ENCODE measurements at regions of chr9 and their contacts with region 1.

Region 1: DNA sequence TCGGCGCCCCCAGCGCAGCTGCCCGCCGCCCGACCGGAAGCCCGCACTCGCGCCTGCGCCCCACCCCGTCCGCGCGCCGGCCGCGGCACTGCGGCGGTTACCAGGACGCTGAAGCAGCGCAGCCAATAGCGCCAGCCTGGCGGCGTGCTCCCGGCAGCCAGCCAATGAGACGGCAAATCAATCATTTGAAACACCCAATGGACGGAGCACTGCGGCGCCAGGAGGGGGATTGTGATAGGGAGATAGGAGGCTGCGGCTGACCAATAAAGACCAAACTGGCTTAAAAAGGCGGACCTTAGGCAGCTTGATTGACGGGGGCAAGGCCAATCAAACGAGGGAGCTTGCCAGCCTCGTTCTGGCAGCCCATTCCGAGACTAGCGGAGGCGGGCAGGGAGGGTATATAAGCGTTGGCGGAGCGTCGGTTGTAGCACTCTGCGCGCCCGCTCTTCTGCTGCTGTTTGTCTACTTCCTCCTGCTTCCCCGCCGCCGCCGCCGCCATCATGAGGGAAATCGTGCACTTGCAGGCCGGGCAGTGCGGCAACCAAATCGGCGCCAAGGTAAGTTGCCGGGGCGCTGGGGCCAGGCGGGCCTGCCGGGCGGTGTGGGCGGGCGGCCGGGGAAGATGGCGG is at the start of gene TUBB4B:
- DNase-seq: peak; percentile 94 to 100
- H3K4me3 ChIP-seq: peak within 1 kb of the TSS; percentile 64 to 92 (median 76)
- H3K27ac ChIP-seq: peak within 1 kb of the TSS; percentile 67; the same call in 1 of the 2 replicates
- H3K4me1 ChIP-seq: peaks cover 0 to 27% (median 21%) of the 10 kb centered on the region in 4 experiments; a peak in 6 of 7 replicates
- H3K27me3 ChIP-seq: no peaks in the 10 kb centered on the region
- CTCF ChIP-seq: no peak
- EP300 ChIP-seq: no peak
- POLR2A ChIP-seq: peak in 1 of 2 experiments; percentile 99; a peak in 2 of 3 replicates
- RAD21 ChIP-seq: no peak
- total RNA-seq, gene TUBB4B: 307 and 311 TPM in 2 replicates

Region 2: GRCh38 chr9:137176302-137177182 is 64.4 kb before region 1 on chr9:
- CTCF ChIA-PET with region 1: interaction called, 29 read pairs
- POLR2A ChIA-PET with region 1: interaction called, 9 read pairs
- DNase-seq: no peak
- H3K4me3 ChIP-seq: no peak overlapping the region
- H3K27ac ChIP-seq: no peak overlapping the region
- H3K4me1 ChIP-seq: peaks cover 0 to 8% (median 3%) of the 10 kb centered on the region in 4 experiments; a peak in 5 of 7 replicates
- H3K27me3 ChIP-seq: peaks cover 0 to 10% (median 5%) of the 10 kb centered on the region in 4 experiments; a peak in 4 of 7 replicates
- CTCF ChIP-seq: peak in 2 of 3 experiments; percentile 58 to 76; a peak in 3 of 4 replicates
- EP300 ChIP-seq: no peak
- POLR2A ChIP-seq: no peak; a peak in 1 of 3 replicates
- RAD21 ChIP-seq: peak; percentile 38 to 57

Region 3: GRCh38 chr9:137217276-137218211 is 23.4 kb before region 1 on chr9:
- CTCF ChIA-PET with region 1: interaction called, 113 read pairs
- POLR2A ChIA-PET with region 1: interaction called, 1,462 read pairs
- DNase-seq: peak; percentile 56 to 87
- H3K4me3 ChIP-seq: no peak overlapping the region
- H3K27ac ChIP-seq: no peak overlapping the region
- H3K4me1 ChIP-seq: peaks cover 0 to 10% (median 4%) of the 10 kb centered on the region in 4 experiments; a peak in 5 of 7 replicates
- H3K27me3 ChIP-seq: no peaks in the 10 kb centered on the region; a peak in 2 of 7 replicates
- CTCF ChIP-seq: peak in 1 of 3 experiments; percentile 1; a peak in 1 of 4 replicates
- EP300 ChIP-seq: no peak
- POLR2A ChIP-seq: peak in 1 of 2 experiments; percentile 37; a peak in 1 of 3 replicates
- RAD21 ChIP-seq: no peak

Region 4: DNA sequence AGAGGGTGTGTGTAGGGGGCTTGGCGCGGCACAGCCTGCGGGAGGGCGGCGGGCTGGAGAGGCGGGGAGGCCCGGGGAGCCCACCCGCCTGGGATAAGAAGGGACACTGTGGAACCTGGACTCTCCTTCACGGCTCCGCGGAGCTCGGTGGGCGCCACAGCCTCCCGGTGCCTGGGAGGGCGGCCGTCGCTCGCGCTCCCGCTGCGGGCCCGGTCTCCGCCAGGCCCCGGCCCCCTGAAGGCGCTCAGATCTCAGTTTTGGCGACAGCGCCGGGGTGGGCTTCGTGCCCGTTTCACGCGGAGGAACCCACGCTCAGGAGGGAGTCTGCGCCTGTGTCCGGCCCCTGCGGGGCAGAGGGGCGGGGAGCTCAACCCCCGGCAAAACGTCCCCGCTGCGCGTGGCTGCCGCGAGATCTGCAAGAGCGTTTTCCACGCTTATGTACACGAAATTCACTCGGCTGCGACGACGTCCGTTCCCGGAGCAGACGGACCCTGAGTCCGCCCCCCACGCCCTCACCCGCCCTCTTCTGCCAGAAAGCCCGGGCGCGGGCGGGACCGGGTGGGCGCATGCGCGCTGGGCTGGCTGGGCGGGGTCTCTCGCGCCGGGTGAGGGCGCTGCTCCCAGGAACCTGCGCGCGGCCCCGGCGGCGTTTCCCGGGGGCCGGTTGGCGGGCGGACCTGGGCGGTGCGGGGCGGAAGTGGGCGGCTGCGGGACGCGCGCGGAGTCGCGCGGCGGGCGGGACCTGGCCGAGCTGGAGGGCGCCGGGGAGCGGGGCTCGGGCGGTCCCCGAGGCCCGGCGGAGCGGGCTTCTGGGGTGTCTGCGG is 13.9 kb after region 1 on chr9 and contains the start of gene NELFB:
- CTCF ChIA-PET with region 1: interaction called, 29 read pairs
- POLR2A ChIA-PET with region 1: interaction called, 1,462 read pairs
- DNase-seq: peak in 1 of 2 experiments; percentile 99
- H3K4me3 ChIP-seq: peak within 1 kb of the TSS; percentile 52 to 100 (median 88)
- H3K27ac ChIP-seq: peak within 1 kb of the TSS; percentile 83; the same call in 1 of the 2 replicates
- H3K4me1 ChIP-seq: peaks cover 0 to 21% (median 16%) of the 10 kb centered on the region in 4 experiments; a peak in 5 of 7 replicates
- H3K27me3 ChIP-seq: peaks cover 0 to 7% (median 0%) of the 10 kb centered on the region in 4 experiments; a peak in 3 of 7 replicates
- CTCF ChIP-seq: peak in 1 of 3 experiments; percentile 2; a peak in 1 of 4 replicates
- EP300 ChIP-seq: no peak
- POLR2A ChIP-seq: peak in 1 of 2 experiments; percentile 43; a peak in 1 of 3 replicates
- RAD21 ChIP-seq: no peak
- total RNA-seq, gene NELFB: 70.8 and 78.0 TPM in 2 replicates

Region 5: DNA sequence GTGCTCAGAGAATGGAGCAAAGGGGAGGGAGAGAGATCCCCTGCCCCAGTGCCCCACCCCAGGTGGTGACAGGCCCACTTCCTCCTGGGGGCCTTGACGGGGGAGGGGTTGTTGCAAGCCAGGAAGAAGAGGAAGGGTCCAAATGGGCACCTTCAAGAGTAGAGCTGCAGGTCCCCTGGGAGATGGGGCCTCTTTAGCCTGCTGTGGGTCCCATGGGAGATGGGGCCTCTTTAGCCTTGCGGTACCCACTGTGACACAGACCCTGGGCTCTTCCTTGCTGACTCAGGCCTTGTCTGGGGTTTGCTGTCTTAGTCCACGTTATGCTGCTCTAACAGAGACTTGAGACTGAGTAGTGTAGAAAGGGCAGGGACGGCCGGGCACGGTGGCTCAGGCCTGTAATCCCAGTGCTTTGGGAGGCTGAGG is 27.0 kb after region 1 on chr9:
- CTCF ChIA-PET with region 1: interaction called, 29 read pairs
- POLR2A ChIA-PET with region 1: interaction called, 1,462 read pairs
- DNase-seq: no peak
- H3K4me3 ChIP-seq: no peak overlapping the region
- H3K27ac ChIP-seq: no peak overlapping the region
- H3K4me1 ChIP-seq: no peaks in the 10 kb centered on the region
- H3K27me3 ChIP-seq: no peaks in the 10 kb centered on the region
- CTCF ChIP-seq: no peak
- EP300 ChIP-seq: no peak
- POLR2A ChIP-seq: no peak
- RAD21 ChIP-seq: no peak